ENCODE measurements at regions of chr18 and their contacts with region 1.

Region 1: DNA sequence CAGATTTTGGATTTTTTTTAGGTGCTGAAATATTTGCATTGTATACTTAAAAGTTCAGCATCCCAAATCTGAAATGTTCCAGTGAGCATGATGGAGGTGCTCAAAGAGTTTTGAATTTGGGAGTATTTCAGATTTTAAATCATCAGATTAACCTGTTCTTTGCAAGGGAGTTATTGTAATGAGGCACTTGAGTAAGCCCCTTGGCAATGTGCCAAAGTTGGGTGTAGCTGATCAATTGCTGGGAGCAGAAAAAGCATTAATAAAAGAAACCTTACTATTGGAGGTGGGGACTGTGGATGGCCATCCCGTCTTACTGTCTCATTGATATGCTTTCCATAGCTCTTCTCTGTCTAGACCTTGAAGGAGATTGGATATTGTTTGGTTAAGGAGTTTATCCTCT is 28.3 kb downstream of the MALT1 start:
- DNase-seq: no peak
- H3K4me3 ChIP-seq: no peak overlapping the region
- H3K27ac ChIP-seq: no peak overlapping the region
- H3K4me1 ChIP-seq: no peaks in the 10 kb centered on the region
- H3K27me3 ChIP-seq: no peaks in the 10 kb centered on the region
- CTCF ChIP-seq: no peak

Region 2: GRCh38 chr18:58590839-58591238 is 108.7 kb before region 1 on chr18:
- CTCF ChIA-PET with region 1: no interaction called
- dilution Hi-C with region 1: loop called (anchors 5 kb)
- in situ Hi-C with region 1: no loop called
- intact Hi-C with region 1: no loop called
- DNase-seq: no peak
- H3K4me3 ChIP-seq: no peak overlapping the region
- H3K27ac ChIP-seq: no peak overlapping the region
- H3K4me1 ChIP-seq: no peaks in the 10 kb centered on the region
- H3K27me3 ChIP-seq: no peaks in the 10 kb centered on the region
- CTCF ChIP-seq: no peak

Region 3: DNA sequence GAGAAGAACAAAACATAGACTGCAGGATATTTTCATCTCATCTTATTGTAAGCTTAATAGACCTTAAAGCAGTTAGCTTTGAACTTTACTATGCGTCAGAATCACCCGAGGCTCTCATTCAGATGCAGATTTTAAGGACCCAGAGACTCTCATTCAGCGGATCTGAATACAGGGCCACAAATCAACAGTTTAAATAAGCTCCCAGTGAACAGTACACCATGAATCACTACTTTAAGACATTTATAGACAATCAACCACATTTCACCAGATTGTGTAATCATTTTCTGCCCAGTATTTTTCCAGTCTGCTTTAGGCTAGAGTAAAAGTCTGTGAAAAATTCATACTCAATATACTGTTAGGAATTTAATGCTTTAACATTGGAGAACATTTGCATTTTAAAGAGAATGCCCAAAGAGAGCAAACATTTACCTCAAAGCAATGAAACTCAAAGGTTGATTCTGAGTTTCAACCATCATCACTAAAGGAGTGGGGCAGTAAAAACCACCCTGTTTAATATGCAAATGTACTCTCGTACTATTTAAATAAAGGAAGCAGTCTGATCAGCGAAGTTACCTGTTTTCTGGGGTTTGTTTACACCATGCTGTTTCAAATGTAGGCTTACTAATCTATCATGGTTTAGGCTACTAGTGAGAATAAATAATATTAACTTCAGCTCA is 59.7 kb before region 1 on chr18:
- CTCF ChIA-PET with region 1: no interaction called
- dilution Hi-C with region 1: loop called (anchors 5 kb)
- in situ Hi-C with region 1: no loop called
- intact Hi-C with region 1: no loop called
- DNase-seq: peak; percentile 63
- H3K4me3 ChIP-seq: no peak overlapping the region
- H3K27ac ChIP-seq: no peak overlapping the region
- H3K4me1 ChIP-seq: peaks cover 29% of the 10 kb centered on the region
- H3K27me3 ChIP-seq: no peaks in the 10 kb centered on the region
- CTCF ChIP-seq: no peak

Measured in mammary epithelial cell (primary cell).